ENCODE measurements at regions of chr12 and their contacts with region 1.

Region 1: GRCh38 chr12:112386726-112387125 is 4.5 kb upstream of the HECTD4 start:
- DNase-seq: no peak

Region 2: GRCh38 chr12:112116232-112117060 is 270.3 kb before region 1 on chr12:
- CTCF ChIA-PET with region 1: no interaction called
- POLR2A ChIA-PET with region 1: interaction called, 10 read pairs
- DNase-seq: peak; percentile 84

Region 3: DNA sequence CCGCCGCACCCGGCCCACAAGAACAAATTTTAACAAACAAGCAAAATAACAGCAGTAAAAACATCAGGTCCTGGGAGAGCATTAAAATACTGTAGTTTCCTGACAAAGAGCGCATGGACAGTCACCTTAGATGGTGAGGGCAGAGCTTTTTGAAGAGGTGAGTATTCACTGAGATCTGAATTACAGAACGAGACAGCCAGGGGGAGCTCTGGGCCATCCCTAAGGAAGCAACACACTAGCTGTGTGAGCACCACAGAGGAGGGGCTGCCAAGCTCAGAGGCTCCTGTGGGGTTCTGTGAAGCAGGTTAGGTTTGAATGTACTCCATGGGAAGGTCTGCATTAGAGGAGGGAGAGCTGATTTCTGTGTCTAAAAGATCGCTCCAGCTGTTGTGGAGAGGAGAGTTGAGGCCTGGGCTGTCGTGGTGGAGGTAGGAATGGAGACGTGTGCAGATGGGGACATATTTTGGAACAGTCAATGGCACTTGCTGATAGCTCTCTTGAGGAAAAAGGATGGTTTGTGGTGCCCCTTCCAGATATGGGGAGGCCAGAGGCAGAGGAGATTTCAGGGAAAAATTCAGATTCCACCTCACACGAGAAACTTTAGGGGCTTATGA is 188.5 kb before region 1 on chr12:
- CTCF ChIA-PET with region 1: interaction called, 28 read pairs
- POLR2A ChIA-PET with region 1: interaction called, 12 read pairs
- DNase-seq: peak; percentile 78